Naive thymus-derived CD4-positive, alpha-beta T cell (primary cell): ENCODE measurements at regions of chr1 and their contacts with region 1.

Region 1: DNA sequence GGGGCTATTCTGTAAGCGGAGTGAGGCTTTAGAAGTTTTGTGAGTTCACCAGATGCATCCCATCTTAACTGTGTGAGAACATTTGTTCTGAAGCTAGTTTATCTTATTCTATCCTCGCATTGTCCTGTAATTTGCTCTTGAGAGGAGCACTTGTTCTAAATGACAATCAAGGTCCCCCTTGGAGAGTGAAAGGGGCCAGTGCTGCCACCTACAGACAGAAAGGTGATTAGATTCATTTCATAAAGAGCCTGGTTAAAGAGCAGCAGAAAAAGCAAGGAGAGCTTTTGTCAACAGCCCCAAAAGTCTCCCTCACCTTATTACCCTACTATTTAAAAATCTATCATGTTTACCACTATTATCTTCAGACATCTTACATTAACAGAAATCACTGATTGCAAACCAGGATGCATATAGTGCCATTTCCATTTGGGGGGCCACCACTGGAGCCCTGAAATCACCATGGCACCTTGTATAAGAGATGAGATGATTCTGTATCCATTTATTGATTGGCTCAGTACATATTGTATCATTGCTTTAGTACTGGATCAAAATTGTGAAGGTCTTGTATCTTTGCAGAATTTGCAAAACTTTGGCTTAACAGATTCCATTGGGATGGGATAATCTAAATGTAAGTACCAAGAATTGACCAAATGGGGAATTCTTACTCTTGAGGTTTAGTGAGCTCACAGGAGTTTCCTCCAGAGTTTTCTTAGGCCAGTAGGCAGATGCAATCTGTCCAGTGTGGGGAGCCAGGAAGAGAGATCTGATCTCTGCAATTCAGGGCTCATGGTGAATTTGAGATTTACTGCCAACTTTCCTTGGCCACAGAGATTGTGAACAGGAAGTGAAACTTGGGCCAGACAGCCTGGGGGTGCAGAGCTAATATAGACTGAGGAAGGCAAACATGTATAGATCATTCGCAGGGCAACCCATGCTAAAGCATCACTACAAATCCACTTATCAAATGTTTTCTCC is 64.3 kb upstream of the TRABD2B start:
- DNase-seq: no peak
- ATAC-seq: peak; percentile 32
- H3K4me3 ChIP-seq: no peak overlapping the region
- H3K4me3 Mint-ChIP-seq: no peak overlapping the region
- H3K27ac ChIP-seq: no peak overlapping the region
- H3K27ac Mint-ChIP-seq: no peak overlapping the region
- H3K4me1 ChIP-seq: no peaks in the 10 kb centered on the region
- H3K4me1 Mint-ChIP-seq: no peaks in the 10 kb centered on the region
- H3K27me3 ChIP-seq: no peaks in the 10 kb centered on the region
- H3K27me3 Mint-ChIP-seq: peaks cover 0 to 11% (median 7%) of the 10 kb centered on the region in 5 donors

Region 2: DNA sequence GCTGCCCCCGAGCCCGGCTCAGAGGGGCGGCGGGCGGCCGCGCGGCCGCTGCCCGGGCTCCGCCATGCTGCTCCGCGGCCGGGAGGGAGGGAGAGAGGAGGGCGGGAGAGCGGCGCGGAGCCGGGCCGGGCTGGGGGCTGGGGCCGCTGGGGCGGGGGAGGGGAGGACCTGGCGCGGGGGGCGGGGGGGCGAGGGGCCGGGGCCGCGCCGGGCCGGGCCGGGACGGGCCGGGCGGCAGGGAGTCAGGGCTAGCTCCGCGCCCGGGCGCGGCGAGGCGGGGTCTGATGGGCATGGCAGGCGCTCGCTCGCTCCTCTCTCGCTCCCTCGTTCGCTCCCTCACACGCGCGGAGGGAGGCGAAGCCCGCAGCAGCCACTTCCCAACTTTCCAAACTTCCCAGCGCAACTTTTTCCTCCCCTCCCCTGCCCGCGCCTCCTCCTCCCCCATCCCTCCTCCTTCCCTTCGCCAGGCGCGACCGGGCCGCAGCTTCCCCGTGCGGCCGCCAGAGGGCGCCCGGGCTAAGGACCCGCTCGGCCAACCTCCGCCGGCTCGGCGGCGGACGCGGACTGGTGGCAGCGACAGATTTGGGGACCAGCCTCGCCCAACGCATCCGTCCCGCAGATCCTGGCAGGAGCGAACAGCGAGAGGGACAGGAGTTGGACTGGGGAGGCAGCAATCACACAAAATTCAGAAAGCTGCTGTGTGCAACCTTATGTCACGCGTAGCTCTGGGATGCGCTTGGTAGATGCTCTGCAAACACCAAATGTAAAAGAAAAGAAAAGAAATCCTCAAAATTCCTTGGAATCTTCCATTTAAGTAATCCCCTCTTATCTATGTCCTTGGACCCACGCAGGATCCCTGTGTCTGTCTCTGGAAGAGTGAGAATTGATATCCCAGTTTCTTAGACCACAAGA is 63.9 kb before region 1 on chr1 and contains the start of gene TRABD2B:
- CTCF ChIA-PET with region 1: no interaction called
- POLR2A ChIA-PET with region 1: no interaction called
- intact Hi-C with region 1: loop called in 1 of 2 experiments (anchors 5 kb)
- DNase-seq: peak; percentile 15 to 80 (median 54)
- ATAC-seq: peak; percentile 79
- H3K4me3 ChIP-seq: no peak within 1 kb of the TSS
- H3K4me3 Mint-ChIP-seq: peak within 1 kb of the TSS; percentile 58 to 93 (median 78)
- H3K27ac ChIP-seq: no peak within 1 kb of the TSS
- H3K27ac Mint-ChIP-seq: no peak within 1 kb of the TSS
- H3K4me1 ChIP-seq: no peaks in the 10 kb centered on the region
- H3K4me1 Mint-ChIP-seq: peaks cover 4 to 14% (median 10%) of the 10 kb centered on the region in 7 donors
- H3K27me3 ChIP-seq: peaks cover 0 to 3% of the 10 kb centered on the region in 2 donors
- H3K27me3 Mint-ChIP-seq: peaks cover 44 to 70% (median 58%) of the 10 kb centered on the region in 5 donors
- total RNA-seq, gene TRABD2B: not detected